Psoas muscle (tissue), 8 donors: ENCODE measurements at regions of chr4 and their contacts with region 1.

Region 1: DNA sequence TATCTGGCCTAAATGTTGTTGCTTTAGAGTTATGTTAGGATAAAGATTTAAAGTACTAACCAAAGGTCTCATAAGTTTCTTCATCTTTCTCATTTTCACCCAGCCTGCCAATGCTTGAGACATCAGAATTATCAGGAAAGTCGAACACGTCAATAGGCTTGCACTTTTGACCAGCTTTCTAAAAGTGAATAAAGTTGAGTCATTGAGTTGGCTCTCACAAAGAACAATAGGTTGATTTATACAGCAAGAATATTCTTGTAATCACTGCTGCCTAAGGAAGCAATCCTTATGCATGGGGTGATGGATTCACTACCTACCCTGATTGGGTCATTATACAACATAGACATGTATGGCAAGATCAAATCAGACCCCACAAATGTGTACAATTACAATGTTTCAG is 5.0 kb downstream of the CENPU start:
- DNase-seq: no peak
- ATAC-seq: no peak
- H3K4me3 ChIP-seq: no peak overlapping the region
- H3K27ac ChIP-seq: no peak overlapping the region
- H3K4me1 ChIP-seq: peaks cover 5% of the 10 kb centered on the region
- H3K27me3 ChIP-seq: no peaks in the 10 kb centered on the region
- CTCF ChIP-seq: no peak

Region 2: DNA sequence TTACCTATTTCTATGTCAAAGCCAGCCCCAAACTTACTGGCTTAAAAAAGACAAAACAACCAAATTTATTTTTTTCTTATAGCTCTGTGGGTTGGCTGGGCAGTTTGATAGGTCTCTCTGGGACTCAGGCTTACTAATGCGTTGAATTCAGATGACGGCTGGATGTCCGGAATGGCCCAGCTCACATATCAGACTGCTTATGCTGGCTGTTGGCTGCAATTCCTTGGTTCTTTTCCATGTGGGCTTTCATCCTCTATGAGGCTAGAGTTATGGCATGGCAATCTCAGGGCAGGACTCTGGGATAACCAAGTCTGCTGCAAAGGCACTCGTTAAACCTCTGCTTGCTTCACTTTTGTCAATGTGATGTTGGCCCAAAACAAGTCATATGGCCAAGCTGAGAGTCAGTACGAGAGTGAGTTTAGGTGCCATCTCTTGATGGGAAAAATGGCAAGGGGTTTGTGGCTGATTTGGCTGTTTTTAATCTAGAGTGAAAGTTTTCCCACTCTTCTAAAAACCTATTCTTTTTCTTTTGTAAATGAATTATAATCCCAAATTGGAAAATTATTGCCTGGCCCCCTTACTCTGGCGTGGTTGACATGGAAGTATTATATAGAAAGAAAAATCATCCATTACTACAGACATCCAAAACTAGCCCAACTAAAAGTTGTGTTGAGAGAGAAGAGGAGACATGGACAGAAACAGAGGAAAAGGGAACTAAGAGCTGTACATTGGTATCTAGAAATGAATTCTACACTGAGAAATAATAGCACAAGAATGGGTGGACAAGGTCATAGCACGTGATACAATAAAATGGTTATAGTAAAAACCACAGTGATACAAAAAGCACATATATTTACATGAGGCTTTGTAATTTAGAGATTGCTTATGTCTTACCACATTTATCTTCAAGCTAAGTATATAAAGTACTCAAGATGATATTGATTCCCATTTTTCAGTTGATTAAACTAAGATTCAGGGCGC is 72.7 kb before region 1 on chr4:
- intact Hi-C with region 1: loop called in 1 of 2 experiments (anchors 5 kb)
- DNase-seq: peak; percentile 30 to 66
- ATAC-seq: peak; percentile 90 to 98 (median 96)
- H3K4me3 ChIP-seq: no peak overlapping the region
- H3K27ac ChIP-seq: peak overlapping the region; percentile 87
- H3K4me1 ChIP-seq: peaks cover 29% of the 10 kb centered on the region
- H3K27me3 ChIP-seq: no peaks in the 10 kb centered on the region
- CTCF ChIP-seq: no peak

Region 3: GRCh38 chr4:184782731-184783373 is 54.0 kb after region 1 on chr4:
- intact Hi-C with region 1: no loop called
- DNase-seq: no peak
- ATAC-seq: peak; percentile 19 to 29 (median 23)
- H3K4me3 ChIP-seq: no peak overlapping the region
- H3K27ac ChIP-seq: peak overlapping the region; percentile 46
- H3K4me1 ChIP-seq: peaks cover 6% of the 10 kb centered on the region
- H3K27me3 ChIP-seq: no peaks in the 10 kb centered on the region
- CTCF ChIP-seq: no peak

Region 4: DNA sequence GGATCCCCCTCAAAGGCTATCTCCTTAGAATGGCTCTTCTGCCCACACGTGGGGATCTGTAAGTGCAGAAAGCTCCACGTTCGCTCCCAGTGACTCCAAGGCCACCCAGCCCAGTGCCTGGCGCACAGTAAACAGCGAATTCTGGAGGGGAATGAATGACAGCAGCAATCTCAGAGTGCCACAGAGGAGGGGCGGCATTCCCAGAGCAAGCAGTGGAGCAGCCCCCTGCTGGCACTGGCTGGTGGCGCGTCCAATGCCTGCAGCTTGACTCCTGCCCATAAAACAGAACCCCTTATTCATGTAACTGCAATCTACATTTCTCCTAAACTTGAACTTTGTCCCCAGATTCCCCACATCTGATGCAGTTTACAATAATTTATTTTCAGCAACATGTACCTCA is 282.6 kb after region 1 on chr4:
- intact Hi-C with region 1: no loop called
- DNase-seq: no peak
- ATAC-seq: no peak
- H3K4me3 ChIP-seq: no peak overlapping the region
- H3K27ac ChIP-seq: no peak overlapping the region
- H3K4me1 ChIP-seq: peaks cover under 1% of the 10 kb centered on the region
- H3K27me3 ChIP-seq: peaks cover 2 to 64% (median 16%) of the 10 kb centered on the region in 3 donors
- CTCF ChIP-seq: no peak